PC-3 (cell line): ENCODE measurements at regions of chr7 and their contacts with region 1.

Region 1: GRCh38 chr7:100081535-100082102 is at the start of gene ZNF3:
- DNase-seq: peak; percentile 98
- ATAC-seq: peak; percentile 80
- H3K4me3 ChIP-seq: peak within 1 kb of the TSS; percentile 100
- H3K27ac ChIP-seq: peak within 1 kb of the TSS; percentile 53
- H3K4me1 ChIP-seq: peaks cover 13% of the 10 kb centered on the region
- H3K27me3 ChIP-seq: no peaks in the 10 kb centered on the region
- CTCF ChIP-seq: peak; percentile 89
- total RNA-seq, gene ZNF3: 16.5 and 18.0 TPM in 2 replicates

Region 2: DNA sequence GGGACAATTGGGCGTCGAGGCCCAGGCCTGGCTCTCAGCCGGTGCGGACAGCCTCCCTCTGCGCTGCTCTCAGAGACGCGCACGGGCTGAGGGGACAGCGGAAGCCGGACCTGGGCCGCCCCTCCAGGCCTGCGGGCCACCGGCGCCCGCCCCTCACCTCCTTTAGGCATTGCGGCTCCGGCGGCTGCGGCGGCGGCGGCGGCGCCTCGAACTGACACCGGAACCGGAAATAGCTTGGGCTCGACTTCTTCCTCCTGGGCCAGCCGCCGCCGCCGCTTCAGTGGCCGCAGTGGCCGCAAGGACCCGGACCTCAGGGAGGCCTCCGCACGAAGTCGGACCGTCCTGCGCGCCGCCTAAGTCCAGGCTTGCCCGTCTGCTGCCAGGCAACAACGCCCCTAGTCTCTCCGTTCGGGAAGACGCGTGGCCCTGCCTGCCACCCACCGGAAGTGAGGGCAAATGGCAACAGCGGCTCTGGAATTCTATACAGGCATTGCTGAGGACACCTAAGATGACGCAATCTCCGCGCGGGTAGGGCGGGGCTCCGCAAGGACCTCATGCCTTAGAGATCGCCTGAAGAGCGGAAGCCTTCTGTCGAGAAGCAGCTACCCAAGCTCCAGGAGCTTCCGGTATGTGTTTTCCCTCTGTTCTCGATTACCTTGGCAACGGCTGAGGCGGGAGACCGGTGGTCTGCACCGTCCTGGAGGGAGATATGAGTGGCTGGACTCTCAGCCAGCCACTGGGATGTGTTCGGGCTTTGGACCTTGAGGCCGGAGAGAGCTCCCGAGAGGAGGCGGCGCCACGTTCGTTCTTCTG is 673.0 kb before region 1 on chr7 and contains the starts of genes BUD31 and PDAP1:
- CTCF ChIA-PET with region 1: no interaction called
- POLR2A ChIA-PET with region 1: no interaction called
- intact Hi-C with region 1: loop called (anchors 5 kb)
- DNase-seq: peak; percentile 87
- ATAC-seq: peak; percentile 82
- H3K4me3 ChIP-seq: peak within 1 kb of the TSS; percentile 90
- H3K27ac ChIP-seq: peak within 1 kb of the TSS; percentile 96
- H3K4me1 ChIP-seq: peaks cover 22% of the 10 kb centered on the region
- H3K27me3 ChIP-seq: no peaks in the 10 kb centered on the region
- CTCF ChIP-seq: no peak
- total RNA-seq, gene BUD31: 120 and 144 TPM in 2 replicates
- total RNA-seq, gene PDAP1: 58.6 and 84.7 TPM in 2 replicates

Region 3: DNA sequence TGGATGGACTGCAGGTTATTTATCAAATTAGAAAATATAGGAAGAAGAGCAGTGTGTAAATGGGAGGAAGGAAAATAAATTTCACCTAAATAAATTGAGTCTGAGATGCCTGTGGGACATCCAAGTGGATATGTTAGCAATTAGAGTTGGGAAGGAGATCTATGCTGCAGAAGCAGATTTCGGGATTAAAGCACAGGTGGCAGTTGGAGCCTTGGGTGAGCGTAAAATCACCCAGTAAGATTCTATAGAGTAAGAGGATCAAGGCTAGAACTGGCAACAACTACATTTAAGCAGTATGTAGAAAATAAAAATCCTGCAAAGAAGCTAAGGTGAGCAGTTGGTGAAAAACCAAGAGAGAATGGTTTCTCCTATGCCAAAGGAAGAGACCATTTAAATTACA is 170.6 kb before region 1 on chr7:
- CTCF ChIA-PET with region 1: no interaction called
- POLR2A ChIA-PET with region 1: no interaction called
- intact Hi-C with region 1: no loop called
- DNase-seq: no peak
- ATAC-seq: no peak
- H3K4me3 ChIP-seq: no peak overlapping the region
- H3K27ac ChIP-seq: no peak overlapping the region
- H3K4me1 ChIP-seq: no peaks in the 10 kb centered on the region
- H3K27me3 ChIP-seq: no peaks in the 10 kb centered on the region
- CTCF ChIP-seq: no peak

Region 4: GRCh38 chr7:99958564-99959227 is 122.9 kb before region 1 on chr7:
- CTCF ChIA-PET with region 1: no interaction called
- POLR2A ChIA-PET with region 1: no interaction called
- intact Hi-C with region 1: no loop called
- DNase-seq: no peak
- ATAC-seq: no peak
- H3K4me3 ChIP-seq: no peak overlapping the region
- H3K27ac ChIP-seq: no peak overlapping the region
- H3K4me1 ChIP-seq: peaks cover 10% of the 10 kb centered on the region
- H3K27me3 ChIP-seq: peaks cover 40% of the 10 kb centered on the region
- CTCF ChIP-seq: no peak

Region 5: DNA sequence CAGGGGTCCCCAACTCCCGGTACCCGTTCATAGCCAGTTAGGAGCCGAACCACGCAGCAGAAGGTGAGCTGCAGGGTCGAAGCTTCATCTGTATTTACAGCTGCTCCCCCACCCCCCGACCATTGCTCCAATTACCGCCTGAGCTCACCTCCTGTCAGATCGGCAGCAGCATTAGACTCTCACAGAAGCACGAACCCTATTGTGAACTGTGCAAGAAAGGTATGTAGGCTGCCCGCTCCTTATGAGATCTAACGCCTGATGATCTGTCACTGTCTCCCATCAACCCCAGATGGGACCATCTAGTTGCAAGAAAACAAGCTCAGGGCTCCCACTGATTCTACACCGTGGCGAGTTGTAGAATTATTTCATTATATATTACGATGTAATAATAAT is 91.2 kb before region 1 on chr7:
- CTCF ChIA-PET with region 1: no interaction called
- POLR2A ChIA-PET with region 1: no interaction called
- intact Hi-C with region 1: loop called (anchors 1 kb)
- DNase-seq: no peak
- ATAC-seq: no peak
- H3K4me3 ChIP-seq: no peak overlapping the region; the same call in 1 of the 2 replicates
- H3K27ac ChIP-seq: no peak overlapping the region
- H3K4me1 ChIP-seq: 0 out of 2 replicates have a peak, but pooled peaks cover 5% of the 10 kb centered on the region
- H3K27me3 ChIP-seq: peaks cover 5% of the 10 kb centered on the region; the same call in 1 of the 2 replicates
- CTCF ChIP-seq: no peak

Region 6: GRCh38 chr7:100101016-100101862 is 19.6 kb after region 1 on chr7 and contains the starts of genes AP4M1 and MCM7:
- CTCF ChIA-PET with region 1: interaction called, 6 read pairs
- POLR2A ChIA-PET with region 1: interaction called, 30 read pairs
- intact Hi-C with region 1: no loop called
- DNase-seq: peak; percentile 98
- ATAC-seq: peak; percentile 85
- H3K4me3 ChIP-seq: peak within 1 kb of the TSS; percentile 80
- H3K27ac ChIP-seq: peak within 1 kb of the TSS; percentile 93
- H3K4me1 ChIP-seq: peaks cover 19% of the 10 kb centered on the region
- H3K27me3 ChIP-seq: no peaks in the 10 kb centered on the region
- CTCF ChIP-seq: no peak
- total RNA-seq, gene AP4M1: 17.9 and 23.9 TPM in 2 replicates
- total RNA-seq, gene MCM7: 208 and 226 TPM in 2 replicates

Region 7: DNA sequence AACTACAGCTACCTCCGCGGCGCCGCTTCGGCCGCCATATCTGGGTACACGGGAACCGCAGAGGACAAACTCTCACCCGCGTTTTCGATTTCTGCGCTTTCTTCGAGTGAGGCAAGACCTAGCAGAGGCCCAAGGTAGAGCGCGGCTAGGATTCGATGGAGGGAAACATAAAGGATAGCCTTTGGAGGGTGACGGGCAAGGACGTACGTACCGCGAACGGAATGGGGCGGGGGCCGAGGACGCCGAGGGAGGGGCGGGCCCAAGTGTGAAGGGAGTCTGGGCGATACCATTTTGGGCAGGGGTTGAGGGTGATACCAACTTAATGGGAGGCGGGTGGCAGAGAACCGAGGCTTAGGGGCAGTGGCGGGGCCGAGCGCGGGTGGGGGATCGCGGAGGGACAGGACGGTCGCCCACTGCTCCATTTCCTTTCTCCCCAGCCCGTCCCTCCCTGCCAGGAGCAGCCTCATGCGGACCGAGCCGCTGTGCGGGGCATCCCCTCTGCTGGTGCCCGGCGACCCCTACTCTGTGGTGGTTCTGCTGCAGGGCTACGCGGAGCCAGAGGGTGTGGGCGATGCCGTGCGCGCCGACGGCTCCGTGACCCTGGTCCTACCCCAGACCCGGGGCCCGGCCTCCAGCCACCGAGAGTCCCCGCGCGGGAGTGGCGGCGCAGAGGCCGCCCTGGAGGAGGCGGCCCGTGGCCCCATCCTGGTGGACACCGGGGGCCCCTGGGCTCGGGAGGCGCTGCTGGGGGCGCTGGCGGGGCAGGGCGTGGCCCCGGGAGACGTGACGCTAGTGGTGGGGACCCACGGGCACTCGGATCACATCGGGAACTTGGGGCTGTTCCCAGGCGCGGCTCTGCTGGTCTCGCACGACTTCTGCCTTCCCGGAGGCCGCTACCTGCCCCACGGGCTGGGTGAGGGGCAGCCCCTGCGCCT is 45.6 kb after region 1 on chr7 and contains the start of gene MBLAC1:
- CTCF ChIA-PET with region 1: no interaction called
- POLR2A ChIA-PET with region 1: interaction called, 5 read pairs
- intact Hi-C with region 1: loop called (anchors 5 kb)
- DNase-seq: peak; percentile 85
- ATAC-seq: peak; percentile 65
- H3K4me3 ChIP-seq: peak within 1 kb of the TSS; percentile 80
- H3K27ac ChIP-seq: peak within 1 kb of the TSS; percentile 92
- H3K4me1 ChIP-seq: 0 out of 2 replicates have a peak, but pooled peaks cover 4% of the 10 kb centered on the region
- H3K27me3 ChIP-seq: no peaks in the 10 kb centered on the region
- CTCF ChIP-seq: no peak
- total RNA-seq, gene MBLAC1: 2.7 and 4.3 TPM in 2 replicates